ENCODE measurements at regions of chr6 and their contacts with region 1.

Region 1: GRCh38 chr6:14066782-14067406 is 50.7 kb upstream of the CD83 start:
- DNase-seq: peak; percentile 81
- ATAC-seq: peak; percentile 88
- H3K4me3 ChIP-seq: no peak overlapping the region
- H3K4me3 Mint-ChIP-seq: no peak overlapping the region
- H3K27ac ChIP-seq: no peak overlapping the region
- H3K27ac Mint-ChIP-seq: peak overlapping the region; percentile 43
- H3K4me1 ChIP-seq: peaks cover 7 to 9% of the 10 kb centered on the region in 2 donors
- H3K4me1 Mint-ChIP-seq: peaks cover 22% of the 10 kb centered on the region
- H3K27me3 ChIP-seq: no peaks in the 10 kb centered on the region
- H3K27me3 Mint-ChIP-seq: peaks cover 4% of the 10 kb centered on the region
- CTCF ChIP-seq: peak; percentile 74

Region 2: GRCh38 chr6:13795041-13795750 is 271.7 kb before region 1 on chr6:
- CTCF ChIA-PET with region 1: interaction called, 14 read pairs
- POLR2A ChIA-PET with region 1: no interaction called
- intact Hi-C with region 1: loop called (anchors 1 kb)
- DNase-seq: peak; percentile 81
- ATAC-seq: peak; percentile 91
- H3K4me3 ChIP-seq: no peak overlapping the region
- H3K4me3 Mint-ChIP-seq: no peak overlapping the region
- H3K27ac ChIP-seq: no peak overlapping the region
- H3K27ac Mint-ChIP-seq: no peak overlapping the region
- H3K4me1 ChIP-seq: no peaks in the 10 kb centered on the region
- H3K4me1 Mint-ChIP-seq: peaks cover 2% of the 10 kb centered on the region
- H3K27me3 ChIP-seq: no peaks in the 10 kb centered on the region
- H3K27me3 Mint-ChIP-seq: no peaks in the 10 kb centered on the region
- CTCF ChIP-seq: peak; percentile 93

Region 3: GRCh38 chr6:13908955-13909381 is 157.9 kb before region 1 on chr6:
- CTCF ChIA-PET with region 1: interaction called, 230 read pairs
- POLR2A ChIA-PET with region 1: no interaction called
- intact Hi-C with region 1: loop called (anchors 1 kb)
- DNase-seq: peak; percentile 80
- ATAC-seq: peak; percentile 85
- H3K4me3 ChIP-seq: no peak overlapping the region
- H3K4me3 Mint-ChIP-seq: no peak overlapping the region
- H3K27ac ChIP-seq: no peak overlapping the region
- H3K27ac Mint-ChIP-seq: no peak overlapping the region
- H3K4me1 ChIP-seq: no peaks in the 10 kb centered on the region
- H3K4me1 Mint-ChIP-seq: peaks cover 1% of the 10 kb centered on the region
- H3K27me3 ChIP-seq: peaks cover 0 to 7% (median 3%) of the 10 kb centered on the region in 4 experiments
- H3K27me3 Mint-ChIP-seq: peaks cover 26% of the 10 kb centered on the region
- CTCF ChIP-seq: peak; percentile 98

Region 4: GRCh38 chr6:14046476-14047068 is 20.3 kb before region 1 on chr6:
- CTCF ChIA-PET with region 1: interaction called, 114 read pairs
- POLR2A ChIA-PET with region 1: no interaction called
- intact Hi-C with region 1: loop called (anchors 2 kb)
- DNase-seq: peak; percentile 78
- ATAC-seq: peak; percentile 89
- H3K4me3 ChIP-seq: no peak overlapping the region
- H3K4me3 Mint-ChIP-seq: no peak overlapping the region
- H3K27ac ChIP-seq: no peak overlapping the region
- H3K27ac Mint-ChIP-seq: no peak overlapping the region
- H3K4me1 ChIP-seq: peaks cover 0 to 4% of the 10 kb centered on the region in 2 donors
- H3K4me1 Mint-ChIP-seq: peaks cover 4% of the 10 kb centered on the region
- H3K27me3 ChIP-seq: peaks cover 0 to 2% (median 0%) of the 10 kb centered on the region in 4 experiments
- H3K27me3 Mint-ChIP-seq: peaks cover 9% of the 10 kb centered on the region
- CTCF ChIP-seq: peak; percentile 81

Region 5: DNA sequence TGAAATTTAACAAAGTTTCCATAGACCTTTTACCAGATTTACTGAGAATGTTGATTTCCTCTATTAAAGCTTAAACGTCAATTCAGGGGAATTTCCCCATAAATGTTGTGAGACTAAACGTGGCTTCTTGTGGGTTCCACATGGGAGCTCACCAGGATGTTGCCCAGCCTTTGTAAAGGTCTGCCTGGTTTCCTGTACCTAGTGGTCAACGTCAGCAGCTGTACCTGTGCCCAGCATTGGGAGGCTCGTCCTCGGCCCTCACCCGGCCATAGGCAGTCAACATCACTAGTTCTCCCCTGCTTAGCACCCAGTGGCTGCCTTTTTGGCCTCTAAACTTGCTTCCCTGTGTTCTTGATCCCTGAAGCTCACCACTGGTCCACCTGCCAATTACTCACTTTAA is 28.5 kb after region 1 on chr6:
- CTCF ChIA-PET with region 1: interaction called, 65 read pairs
- POLR2A ChIA-PET with region 1: interaction called, 4 read pairs
- intact Hi-C with region 1: no loop called
- DNase-seq: peak; percentile 95
- ATAC-seq: peak; percentile 77
- H3K4me3 ChIP-seq: peak overlapping the region in 2 of 5 experiments; percentile 18 to 57
- H3K4me3 Mint-ChIP-seq: peak overlapping the region; percentile 81
- H3K27ac ChIP-seq: peak overlapping the region; percentile 98 to 100
- H3K27ac Mint-ChIP-seq: peak overlapping the region; percentile 99
- H3K4me1 ChIP-seq: peaks cover 86 to 90% of the 10 kb centered on the region in 2 donors
- H3K4me1 Mint-ChIP-seq: peaks cover 88% of the 10 kb centered on the region
- H3K27me3 ChIP-seq: no peaks in the 10 kb centered on the region
- H3K27me3 Mint-ChIP-seq: no peaks in the 10 kb centered on the region
- CTCF ChIP-seq: no peak

Region 6: DNA sequence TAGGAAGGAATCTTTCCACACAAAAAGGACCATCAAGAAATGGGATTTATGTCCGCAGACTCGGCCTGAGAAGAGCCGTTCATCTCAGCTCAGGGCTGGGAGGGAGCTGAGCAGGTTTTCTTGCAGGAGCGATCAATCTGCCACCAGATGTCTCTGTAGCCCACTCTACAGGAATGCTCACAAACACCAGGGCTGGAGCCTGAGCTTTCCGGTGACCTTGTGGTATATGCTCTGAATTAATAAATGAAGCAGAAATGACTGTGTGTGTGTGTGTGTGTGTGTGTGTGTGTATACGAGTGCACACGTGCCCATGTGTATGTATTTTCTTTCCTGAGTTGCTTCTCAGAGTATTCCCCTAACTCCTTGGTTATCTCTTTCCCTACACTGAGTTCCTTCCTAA is 62.7 kb after region 1 on chr6:
- CTCF ChIA-PET with region 1: interaction called, 56 read pairs
- POLR2A ChIA-PET with region 1: interaction called, 3 read pairs
- intact Hi-C with region 1: no loop called
- DNase-seq: peak; percentile 69
- ATAC-seq: no peak
- H3K4me3 ChIP-seq: peak overlapping the region in 1 of 5 experiments; percentile 15
- H3K4me3 Mint-ChIP-seq: peak overlapping the region; percentile 82
- H3K27ac ChIP-seq: peak overlapping the region in 1 of 2 donors; percentile 43
- H3K27ac Mint-ChIP-seq: peak overlapping the region; percentile 80
- H3K4me1 ChIP-seq: peaks cover 78 to 90% of the 10 kb centered on the region in 2 donors
- H3K4me1 Mint-ChIP-seq: peaks cover 93% of the 10 kb centered on the region
- H3K27me3 ChIP-seq: no peaks in the 10 kb centered on the region
- H3K27me3 Mint-ChIP-seq: no peaks in the 10 kb centered on the region
- CTCF ChIP-seq: no peak

Measured in B cell (primary cell).